ENCODE measurements at regions of chr19 and their contacts with region 1.

Region 1: GRCh38 chr19:42244347-42245220 is 2.2 kb upstream of the GSK3A start:
- DNase-seq: peak; percentile 76 to 93 (median 90)
- ATAC-seq: peak; percentile 51
- H3K4me3 ChIP-seq: peak overlapping the region; percentile 68
- H3K4me3 Mint-ChIP-seq: peak overlapping the region; percentile 91 to 98 (median 96)
- H3K27ac ChIP-seq: peak overlapping the region; percentile 73
- H3K27ac Mint-ChIP-seq: peak overlapping the region; percentile 84 to 99 (median 96)
- H3K4me1 ChIP-seq: peaks cover 28 to 38% of the 10 kb centered on the region in 2 donors
- H3K4me1 Mint-ChIP-seq: peaks cover 36 to 58% (median 54%) of the 10 kb centered on the region in 7 donors
- H3K27me3 ChIP-seq: no peaks in the 10 kb centered on the region
- H3K27me3 Mint-ChIP-seq: no peaks in the 10 kb centered on the region

Region 2: DNA sequence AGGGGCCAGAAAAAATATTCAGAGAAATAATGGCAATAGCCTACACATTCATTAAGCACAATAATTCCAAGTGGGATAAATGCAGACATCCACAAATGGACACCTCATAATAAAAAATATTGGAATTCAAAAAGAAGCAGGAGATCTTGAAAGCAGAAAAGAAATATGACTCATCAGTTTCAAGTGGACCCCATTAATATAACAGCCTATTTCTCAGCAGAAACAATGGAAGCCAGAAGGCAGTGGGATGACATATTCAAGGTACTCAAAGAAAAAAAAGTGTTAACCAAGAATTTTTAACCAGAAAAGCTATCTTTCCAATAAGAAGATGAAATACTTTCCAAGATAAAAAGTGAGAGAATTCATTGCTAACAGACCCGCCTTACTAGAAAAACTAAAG is 1204.8 kb before region 1 on chr19:
- CTCF ChIA-PET with region 1: no interaction called
- POLR2A ChIA-PET with region 1: no interaction called
- intact Hi-C with region 1: no loop called
- DNase-seq: no peak
- ATAC-seq: no peak
- H3K4me3 ChIP-seq: no peak overlapping the region
- H3K4me3 Mint-ChIP-seq: no peak overlapping the region
- H3K27ac ChIP-seq: no peak overlapping the region
- H3K27ac Mint-ChIP-seq: no peak overlapping the region
- H3K4me1 ChIP-seq: no peaks in the 10 kb centered on the region
- H3K4me1 Mint-ChIP-seq: peaks cover 0 to 5% (median 0%) of the 10 kb centered on the region in 7 donors
- H3K27me3 ChIP-seq: no peaks in the 10 kb centered on the region
- H3K27me3 Mint-ChIP-seq: peaks cover 0 to 36% (median 6%) of the 10 kb centered on the region in 5 donors

Region 3: DNA sequence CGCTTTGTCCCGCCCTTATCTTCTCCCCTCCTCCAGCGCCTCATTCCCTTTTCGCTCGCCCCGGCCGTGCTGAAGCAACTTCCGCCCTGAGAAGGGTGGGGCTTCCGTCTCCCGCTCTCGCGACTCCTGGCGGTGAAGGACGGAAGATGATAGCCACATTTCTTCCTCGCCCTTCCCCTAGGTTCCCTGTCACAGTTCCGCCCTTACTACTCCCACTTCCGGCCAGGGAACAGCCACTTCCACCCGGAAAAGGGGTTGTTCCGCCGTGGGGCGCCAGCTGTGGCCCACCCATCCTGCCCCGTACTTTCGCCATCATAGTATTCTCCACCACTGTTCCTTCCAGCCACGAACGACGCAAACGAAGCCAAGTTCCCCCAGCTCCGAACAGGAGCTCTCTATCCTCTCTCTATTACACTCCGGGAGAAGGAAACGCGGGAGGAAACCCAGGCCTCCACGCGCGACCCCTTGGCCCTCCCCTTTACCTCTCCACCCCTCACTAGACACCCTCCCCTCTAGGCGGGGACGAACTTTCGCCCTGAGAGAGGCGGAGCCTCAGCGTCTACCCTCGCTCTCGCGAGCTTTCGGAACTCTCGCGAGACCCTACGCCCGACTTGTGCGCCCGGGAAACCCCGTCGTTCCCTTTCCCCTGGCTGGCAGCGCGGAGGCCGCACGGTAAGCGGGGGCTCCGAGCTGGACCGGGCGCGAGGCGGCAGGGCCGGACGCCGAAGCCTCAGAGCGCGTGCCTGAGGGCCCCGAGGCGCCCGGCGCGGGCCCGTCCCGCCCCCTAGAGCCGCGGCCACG is 384.8 kb before region 1 on chr19 and contains the start of gene RPS19:
- CTCF ChIA-PET with region 1: no interaction called
- POLR2A ChIA-PET with region 1: no interaction called
- intact Hi-C with region 1: loop called (anchors 1 kb)
- DNase-seq: peak; percentile 95 to 99 (median 98)
- ATAC-seq: peak; percentile 92
- H3K4me3 ChIP-seq: peak within 1 kb of the TSS; percentile 90
- H3K4me3 Mint-ChIP-seq: peak within 1 kb of the TSS; percentile 86 to 95 (median 93)
- H3K27ac ChIP-seq: peak within 1 kb of the TSS; percentile 89
- H3K27ac Mint-ChIP-seq: peak within 1 kb of the TSS; percentile 91 to 98 (median 95)
- H3K4me1 ChIP-seq: peaks cover 39 to 43% of the 10 kb centered on the region in 2 donors
- H3K4me1 Mint-ChIP-seq: peaks cover 34 to 47% (median 41%) of the 10 kb centered on the region in 7 donors
- H3K27me3 ChIP-seq: no peaks in the 10 kb centered on the region
- H3K27me3 Mint-ChIP-seq: peaks cover 0 to 9% (median 0%) of the 10 kb centered on the region in 5 donors
- total RNA-seq, gene RPS19: 2,739 to 3,712 (median 3,396) TPM

Region 4: GRCh38 chr19:42075616-42076379 is 168.8 kb before region 1 on chr19 and contains the start of gene ZNF574:
- CTCF ChIA-PET with region 1: no interaction called
- POLR2A ChIA-PET with region 1: no interaction called
- intact Hi-C with region 1: loop called in 1 of 2 experiments (anchors 1 kb)
- DNase-seq: peak; percentile 91 to 99 (median 98)
- ATAC-seq: peak; percentile 98
- H3K4me3 ChIP-seq: peak within 1 kb of the TSS; percentile 70
- H3K4me3 Mint-ChIP-seq: peak within 1 kb of the TSS; percentile 92 to 100 (median 98)
- H3K27ac ChIP-seq: peak within 1 kb of the TSS; percentile 97
- H3K27ac Mint-ChIP-seq: peak within 1 kb of the TSS; percentile 99 to 100 (median 100)
- H3K4me1 ChIP-seq: peaks cover 19 to 24% of the 10 kb centered on the region in 2 donors
- H3K4me1 Mint-ChIP-seq: peaks cover 26 to 44% (median 38%) of the 10 kb centered on the region in 7 donors
- H3K27me3 ChIP-seq: no peaks in the 10 kb centered on the region
- H3K27me3 Mint-ChIP-seq: peaks cover 0 to 13% (median 0%) of the 10 kb centered on the region in 5 donors
- total RNA-seq, gene ZNF574: 17.6 to 26.7 (median 20.9) TPM

Region 5: GRCh38 chr19:42184401-42184861 is 60.2 kb before region 1 on chr19:
- CTCF ChIA-PET with region 1: interaction called, 3 read pairs
- POLR2A ChIA-PET with region 1: no interaction called
- intact Hi-C with region 1: loop called in 1 of 2 experiments (anchors 2 kb)
- DNase-seq: peak; percentile 29 to 76 (median 51)
- ATAC-seq: peak; percentile 68
- H3K4me3 ChIP-seq: no peak overlapping the region
- H3K4me3 Mint-ChIP-seq: peak overlapping the region in 7 of 10 donors; percentile 28 to 71 (median 55)
- H3K27ac ChIP-seq: no peak overlapping the region
- H3K27ac Mint-ChIP-seq: peak overlapping the region; percentile 41 to 73 (median 65)
- H3K4me1 ChIP-seq: peaks cover 25 to 29% of the 10 kb centered on the region in 2 donors
- H3K4me1 Mint-ChIP-seq: peaks cover 43 to 62% (median 52%) of the 10 kb centered on the region in 7 donors
- H3K27me3 ChIP-seq: no peaks in the 10 kb centered on the region
- H3K27me3 Mint-ChIP-seq: peaks cover 0 to 16% (median 0%) of the 10 kb centered on the region in 5 donors

Region 6: DNA sequence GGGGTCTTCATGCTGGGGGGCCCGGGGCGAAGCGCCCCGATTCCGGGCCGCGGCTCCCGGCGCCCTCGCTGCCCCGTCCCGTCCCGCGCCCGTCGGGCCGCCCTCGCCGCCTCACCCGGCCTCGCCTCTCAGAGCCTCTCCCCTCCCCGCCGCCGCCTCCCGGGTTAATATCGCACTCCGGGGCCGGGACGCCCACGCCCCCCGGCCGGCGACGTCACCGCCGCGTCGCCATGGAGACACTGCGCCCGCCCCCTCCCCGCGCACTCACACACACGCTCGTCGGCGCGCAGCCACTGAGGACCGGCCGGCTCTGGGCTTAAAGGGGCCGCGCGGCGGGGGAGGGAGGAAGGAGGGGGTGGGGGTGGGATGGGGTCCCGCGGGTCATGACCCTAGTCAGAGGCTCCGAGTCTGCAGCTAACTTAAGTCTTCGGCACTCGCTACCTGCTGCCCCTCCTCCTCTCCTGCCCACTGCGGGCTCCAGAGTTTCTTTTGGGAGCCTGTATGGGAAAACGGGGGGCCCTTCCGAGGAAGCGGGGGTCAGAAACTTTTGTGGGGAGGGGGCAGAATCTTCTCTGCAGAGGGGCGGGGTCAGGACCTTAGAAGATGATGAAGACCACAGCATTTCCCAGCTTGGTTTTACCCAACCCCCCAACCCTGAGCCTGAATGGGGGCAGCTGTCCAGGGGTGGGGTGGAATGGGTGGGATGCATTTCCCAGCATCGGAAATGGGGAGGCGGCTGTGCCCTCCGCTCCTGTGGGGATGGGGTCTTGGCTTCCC is 10.6 kb after region 1 on chr19 and contains the start of gene ERF:
- CTCF ChIA-PET with region 1: interaction called, 8 read pairs
- POLR2A ChIA-PET with region 1: interaction called, 9 read pairs
- intact Hi-C with region 1: loop called (anchors 1 kb)
- DNase-seq: peak; percentile 90 to 98 (median 94)
- ATAC-seq: peak; percentile 90
- H3K4me3 ChIP-seq: peak within 1 kb of the TSS; percentile 96
- H3K4me3 Mint-ChIP-seq: peak within 1 kb of the TSS; percentile 42 to 99 (median 77)
- H3K27ac ChIP-seq: peak within 1 kb of the TSS; percentile 99
- H3K27ac Mint-ChIP-seq: peak within 1 kb of the TSS in 8 of 9 donors; percentile 43 to 92 (median 82)
- H3K4me1 ChIP-seq: peaks cover 20 to 29% of the 10 kb centered on the region in 2 donors
- H3K4me1 Mint-ChIP-seq: peaks cover 20 to 37% (median 30%) of the 10 kb centered on the region in 7 donors
- H3K27me3 ChIP-seq: no peaks in the 10 kb centered on the region
- H3K27me3 Mint-ChIP-seq: peaks cover 0 to 10% (median 0%) of the 10 kb centered on the region in 5 donors
- total RNA-seq, gene ERF: 42.5 to 105 (median 51.8) TPM

Region 7: GRCh38 chr19:42295831-42296525 is 51.4 kb after region 1 on chr19:
- CTCF ChIA-PET with region 1: interaction called, 4 read pairs
- POLR2A ChIA-PET with region 1: interaction called, 6 read pairs
- intact Hi-C with region 1: loop called in 1 of 2 experiments (anchors 1 kb)
- DNase-seq: peak; percentile 76 to 94 (median 85)
- ATAC-seq: peak; percentile 96
- H3K4me3 ChIP-seq: no peak overlapping the region
- H3K4me3 Mint-ChIP-seq: no peak overlapping the region
- H3K27ac ChIP-seq: no peak overlapping the region
- H3K27ac Mint-ChIP-seq: peak overlapping the region in 6 of 9 donors; percentile 11 to 70 (median 42)
- H3K4me1 ChIP-seq: peaks cover 0 to 8% of the 10 kb centered on the region in 2 donors
- H3K4me1 Mint-ChIP-seq: peaks cover 8 to 18% (median 12%) of the 10 kb centered on the region in 7 donors
- H3K27me3 ChIP-seq: no peaks in the 10 kb centered on the region
- H3K27me3 Mint-ChIP-seq: no peaks in the 10 kb centered on the region

Region 8: DNA sequence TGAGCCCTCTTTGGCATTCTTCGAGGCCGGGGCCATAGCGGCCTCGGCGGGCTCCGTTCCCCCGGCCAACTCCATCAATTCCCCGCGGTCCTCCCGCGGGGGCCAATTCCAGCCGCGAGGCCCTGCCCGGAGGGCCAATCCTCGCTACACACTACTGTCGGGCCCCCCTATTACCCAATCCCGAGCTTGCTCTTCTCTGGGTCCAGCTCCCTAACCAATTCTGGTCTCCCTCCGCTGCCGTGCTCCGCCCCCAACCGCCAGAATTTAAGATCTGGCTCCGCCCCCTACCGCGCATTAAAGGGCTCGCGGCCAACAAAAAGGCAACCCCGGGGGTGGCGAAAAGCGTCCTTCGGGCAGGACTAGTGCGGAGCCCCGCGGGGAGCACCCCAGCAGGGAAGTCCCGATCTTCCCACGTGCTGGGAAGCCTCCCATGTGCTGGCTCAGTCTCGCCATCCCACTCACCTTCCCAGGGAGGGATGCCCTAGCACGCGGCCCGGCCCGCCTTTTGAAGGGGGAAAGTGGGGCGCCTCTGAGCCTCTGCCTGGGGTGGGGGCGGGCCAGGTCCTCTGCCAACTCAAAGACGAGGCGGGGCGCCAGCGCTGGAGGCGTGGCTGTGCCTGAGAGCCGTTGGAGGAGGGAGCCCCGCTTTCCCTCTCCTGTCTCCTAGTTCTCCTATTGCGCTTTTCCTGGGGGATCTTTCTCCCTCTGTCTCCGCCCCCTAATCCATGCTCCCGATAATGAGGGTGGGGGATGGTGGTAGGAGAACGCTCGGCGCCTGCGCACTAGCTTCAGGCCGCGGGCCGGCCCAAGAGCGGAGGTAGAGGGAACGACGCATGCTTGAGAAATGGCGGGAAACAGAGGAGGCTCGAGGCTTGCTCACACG is 179.1 kb after region 1 on chr19:
- CTCF ChIA-PET with region 1: no interaction called
- POLR2A ChIA-PET with region 1: no interaction called
- intact Hi-C with region 1: loop called in 1 of 2 experiments (anchors 5 kb)
- DNase-seq: peak; percentile 79 to 94 (median 94)
- ATAC-seq: peak; percentile 95
- H3K4me3 ChIP-seq: peak overlapping the region; percentile 70
- H3K4me3 Mint-ChIP-seq: peak overlapping the region; percentile 89 to 100 (median 98)
- H3K27ac ChIP-seq: peak overlapping the region; percentile 77
- H3K27ac Mint-ChIP-seq: peak overlapping the region; percentile 72 to 96 (median 87)
- H3K4me1 ChIP-seq: peaks cover 21 to 30% of the 10 kb centered on the region in 2 donors
- H3K4me1 Mint-ChIP-seq: peaks cover 30 to 46% (median 39%) of the 10 kb centered on the region in 7 donors
- H3K27me3 ChIP-seq: no peaks in the 10 kb centered on the region
- H3K27me3 Mint-ChIP-seq: peaks cover 0 to 4% (median 0%) of the 10 kb centered on the region in 5 donors

Region 9: DNA sequence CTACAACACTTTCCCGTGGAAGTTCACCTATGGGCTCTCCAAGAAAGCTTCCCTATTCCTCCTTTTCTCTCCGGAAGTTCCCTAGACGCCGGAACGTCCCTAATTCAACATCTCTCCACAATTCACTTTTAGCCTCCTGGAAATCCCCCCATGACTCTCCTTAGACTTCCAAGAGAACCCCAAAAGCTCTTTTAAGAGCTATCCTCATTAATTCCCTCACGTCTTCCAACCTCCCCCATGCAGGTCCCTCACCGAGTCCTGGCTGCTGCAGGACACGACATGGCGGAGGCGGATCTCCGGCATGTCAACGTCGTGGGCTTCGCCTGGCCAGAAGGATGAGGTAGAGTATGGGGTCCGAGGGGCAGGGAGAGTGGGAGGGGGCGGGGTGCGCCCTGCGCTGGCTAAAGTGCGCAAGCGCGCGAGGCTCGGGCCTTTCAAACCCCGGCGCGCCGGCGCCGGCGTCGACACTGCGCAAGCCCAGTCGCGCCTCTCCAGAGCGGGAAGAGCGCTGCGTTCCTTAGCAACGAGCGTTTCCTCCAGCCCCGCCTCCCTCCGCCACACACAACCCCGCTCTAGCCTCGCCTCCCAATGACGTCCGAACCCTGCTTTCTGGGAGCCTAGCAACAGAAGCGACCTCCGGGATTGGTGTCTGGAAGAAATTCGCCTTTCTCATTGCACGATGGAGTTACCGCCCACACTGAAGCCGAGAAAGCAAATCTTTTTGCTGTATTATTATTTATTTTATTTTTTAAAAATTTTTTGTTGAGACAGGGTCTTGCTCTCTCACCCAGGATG is 1330.8 kb after region 1 on chr19 and contains the starts of genes PINLYP and XRCC1:
- CTCF ChIA-PET with region 1: no interaction called
- POLR2A ChIA-PET with region 1: no interaction called
- intact Hi-C with region 1: no loop called
- DNase-seq: peak; percentile 85 to 99 (median 95)
- ATAC-seq: peak; percentile 99
- H3K4me3 ChIP-seq: peak within 1 kb of the TSS; percentile 77
- H3K4me3 Mint-ChIP-seq: peak within 1 kb of the TSS; percentile 92 to 98 (median 96)
- H3K27ac ChIP-seq: peak within 1 kb of the TSS; percentile 98
- H3K27ac Mint-ChIP-seq: peak within 1 kb of the TSS; percentile 93 to 99 (median 96)
- H3K4me1 ChIP-seq: peaks cover 12 to 14% of the 10 kb centered on the region in 2 donors
- H3K4me1 Mint-ChIP-seq: peaks cover 26 to 63% (median 51%) of the 10 kb centered on the region in 7 donors
- H3K27me3 ChIP-seq: no peaks in the 10 kb centered on the region
- H3K27me3 Mint-ChIP-seq: peaks cover 0 to 5% (median 0%) of the 10 kb centered on the region in 5 donors
- total RNA-seq, gene PINLYP: 0.27 to 5.8 (median 0.59) TPM
- total RNA-seq, gene XRCC1: 32.0 to 36.1 (median 35.4) TPM